ENCODE measurements at regions of chr10 and their contacts with region 1.

Region 1: GRCh38 chr10:70363971-70364771 is 18.3 kb downstream of the LRRC20 start:
- DNase-seq: peak; percentile 63 to 92 (median 85)
- ATAC-seq: peak; percentile 99
- H3K4me3 ChIP-seq: no peak overlapping the region
- H3K4me3 Mint-ChIP-seq: no peak overlapping the region
- H3K27ac ChIP-seq: no peak overlapping the region
- H3K27ac Mint-ChIP-seq: no peak overlapping the region
- H3K4me1 ChIP-seq: peaks cover 10% of the 10 kb centered on the region
- H3K4me1 Mint-ChIP-seq: peaks cover 8% of the 10 kb centered on the region
- H3K27me3 ChIP-seq: no peaks in the 10 kb centered on the region
- H3K27me3 Mint-ChIP-seq: peaks cover 2% of the 10 kb centered on the region
- CTCF ChIP-seq: peak; percentile 87

Region 2: GRCh38 chr10:70084189-70084588 is 280.0 kb before region 1 on chr10:
- CTCF ChIA-PET with region 1: interaction called, 5 read pairs
- POLR2A ChIA-PET with region 1: no interaction called
- intact Hi-C with region 1: loop called (anchors 1 to 10 kb)
- DNase-seq: peak in 2 of 9 experiments; percentile 15 to 31
- ATAC-seq: no peak
- H3K4me3 ChIP-seq: no peak overlapping the region
- H3K4me3 Mint-ChIP-seq: no peak overlapping the region
- H3K27ac ChIP-seq: no peak overlapping the region
- H3K27ac Mint-ChIP-seq: no peak overlapping the region
- H3K4me1 ChIP-seq: no peaks in the 10 kb centered on the region
- H3K4me1 Mint-ChIP-seq: no peaks in the 10 kb centered on the region
- H3K27me3 ChIP-seq: no peaks in the 10 kb centered on the region
- H3K27me3 Mint-ChIP-seq: no peaks in the 10 kb centered on the region
- CTCF ChIP-seq: no peak

Region 3: GRCh38 chr10:70197235-70197945 is 166.8 kb before region 1 on chr10:
- CTCF ChIA-PET with region 1: interaction called, 11 read pairs
- POLR2A ChIA-PET with region 1: no interaction called
- intact Hi-C with region 1: no loop called
- DNase-seq: peak in 4 of 9 experiments; percentile 29 to 58 (median 46)
- ATAC-seq: no peak
- H3K4me3 ChIP-seq: no peak overlapping the region
- H3K4me3 Mint-ChIP-seq: peak overlapping the region; percentile 33
- H3K27ac ChIP-seq: peak overlapping the region in 1 of 2 experiments; percentile 50
- H3K27ac Mint-ChIP-seq: peak overlapping the region; percentile 72
- H3K4me1 ChIP-seq: peaks cover 15% of the 10 kb centered on the region
- H3K4me1 Mint-ChIP-seq: peaks cover 31% of the 10 kb centered on the region
- H3K27me3 ChIP-seq: no peaks in the 10 kb centered on the region
- H3K27me3 Mint-ChIP-seq: no peaks in the 10 kb centered on the region
- CTCF ChIP-seq: no peak

Region 4: GRCh38 chr10:70233109-70233938 is 130.8 kb before region 1 on chr10 and contains the start of gene PPA1:
- CTCF ChIA-PET with region 1: interaction called, 65 read pairs
- POLR2A ChIA-PET with region 1: interaction called, 11 read pairs
- intact Hi-C with region 1: no loop called
- DNase-seq: peak; percentile 98 to 100 (median 99)
- ATAC-seq: peak; percentile 93
- H3K4me3 ChIP-seq: peak within 1 kb of the TSS; percentile 87 to 90
- H3K4me3 Mint-ChIP-seq: peak within 1 kb of the TSS; percentile 89
- H3K27ac ChIP-seq: peak within 1 kb of the TSS; percentile 74 to 80
- H3K27ac Mint-ChIP-seq: peak within 1 kb of the TSS; percentile 93
- H3K4me1 ChIP-seq: peaks cover 9% of the 10 kb centered on the region
- H3K4me1 Mint-ChIP-seq: peaks cover 36% of the 10 kb centered on the region
- H3K27me3 ChIP-seq: no peaks in the 10 kb centered on the region
- H3K27me3 Mint-ChIP-seq: peaks cover 4% of the 10 kb centered on the region
- CTCF ChIP-seq: no peak
- total RNA-seq, gene PPA1: 79.9 to 83.1 TPM

Region 5: GRCh38 chr10:70272925-70273316 is 91.2 kb before region 1 on chr10:
- CTCF ChIA-PET with region 1: interaction called, 53 read pairs
- POLR2A ChIA-PET with region 1: no interaction called
- intact Hi-C with region 1: loop called (anchors 1 to 2 kb)
- DNase-seq: peak in 2 of 9 experiments; percentile 55 to 73
- ATAC-seq: peak; percentile 86
- H3K4me3 ChIP-seq: no peak overlapping the region
- H3K4me3 Mint-ChIP-seq: peak overlapping the region; percentile 57
- H3K27ac ChIP-seq: no peak overlapping the region
- H3K27ac Mint-ChIP-seq: no peak overlapping the region
- H3K4me1 ChIP-seq: no peaks in the 10 kb centered on the region
- H3K4me1 Mint-ChIP-seq: peaks cover 9% of the 10 kb centered on the region
- H3K27me3 ChIP-seq: no peaks in the 10 kb centered on the region
- H3K27me3 Mint-ChIP-seq: no peaks in the 10 kb centered on the region
- CTCF ChIP-seq: peak; percentile 73

Region 6: DNA sequence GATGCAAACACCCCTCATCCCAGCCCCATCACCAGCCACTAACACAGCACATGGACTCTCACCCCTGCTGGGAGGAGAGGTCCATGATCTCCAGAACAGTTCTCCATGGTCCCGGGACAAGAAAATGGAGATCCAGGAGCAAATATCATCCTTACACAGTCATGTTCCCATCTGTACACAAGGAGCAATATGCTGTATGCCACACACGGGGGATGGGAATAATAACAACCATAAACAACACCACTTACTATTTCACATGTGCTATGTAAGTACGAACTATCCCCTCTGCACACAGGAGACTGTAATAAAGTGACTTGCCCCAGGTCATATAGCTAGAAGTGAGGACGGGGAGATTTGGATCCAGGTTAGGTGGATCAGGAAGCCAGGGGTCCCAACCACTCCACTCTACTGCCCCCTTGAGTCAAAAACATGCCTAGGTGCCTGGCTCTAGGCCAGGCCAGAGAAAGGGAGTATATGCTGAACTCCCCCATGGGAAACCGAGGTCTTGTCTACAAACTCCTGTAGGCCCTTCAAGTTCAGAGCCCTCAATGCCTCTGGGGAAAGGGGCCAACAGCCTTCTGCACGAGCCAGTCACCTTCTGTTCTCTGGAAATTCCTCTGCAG is 15.8 kb before region 1 on chr10:
- CTCF ChIA-PET with region 1: interaction called, 28 read pairs
- POLR2A ChIA-PET with region 1: no interaction called
- intact Hi-C with region 1: no loop called
- DNase-seq: peak in 6 of 9 experiments; percentile 18 to 60 (median 32)
- ATAC-seq: peak; percentile 38
- H3K4me3 ChIP-seq: no peak overlapping the region
- H3K4me3 Mint-ChIP-seq: no peak overlapping the region
- H3K27ac ChIP-seq: no peak overlapping the region
- H3K27ac Mint-ChIP-seq: no peak overlapping the region
- H3K4me1 ChIP-seq: no peaks in the 10 kb centered on the region
- H3K4me1 Mint-ChIP-seq: no peaks in the 10 kb centered on the region
- H3K27me3 ChIP-seq: no peaks in the 10 kb centered on the region
- H3K27me3 Mint-ChIP-seq: no peaks in the 10 kb centered on the region
- CTCF ChIP-seq: peak; percentile 39

Region 7: DNA sequence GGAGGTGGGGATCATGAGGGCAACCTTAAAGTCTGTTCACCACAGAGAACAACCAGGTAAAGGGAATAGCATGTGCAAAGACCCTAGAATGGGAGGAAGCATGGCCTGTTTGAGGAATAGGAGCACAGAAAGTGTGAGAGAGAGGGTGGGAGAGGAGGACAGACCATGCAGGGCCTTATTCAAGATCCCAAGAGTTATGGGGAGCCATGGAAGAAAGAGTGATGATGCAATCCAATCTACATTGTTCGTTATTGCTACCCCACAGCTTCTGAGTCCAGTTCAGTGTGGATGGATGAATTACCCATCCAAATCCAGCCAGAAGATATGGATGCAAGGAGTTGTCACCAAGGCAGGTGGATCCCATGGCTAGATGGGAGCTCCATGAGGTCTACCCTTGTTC is 32.0 kb after region 1 on chr10:
- CTCF ChIA-PET with region 1: interaction called, 16 read pairs
- POLR2A ChIA-PET with region 1: no interaction called
- intact Hi-C with region 1: no loop called
- DNase-seq: no peak
- ATAC-seq: no peak
- H3K4me3 ChIP-seq: no peak overlapping the region
- H3K4me3 Mint-ChIP-seq: no peak overlapping the region
- H3K27ac ChIP-seq: no peak overlapping the region
- H3K27ac Mint-ChIP-seq: no peak overlapping the region
- H3K4me1 ChIP-seq: no peaks in the 10 kb centered on the region
- H3K4me1 Mint-ChIP-seq: no peaks in the 10 kb centered on the region
- H3K27me3 ChIP-seq: no peaks in the 10 kb centered on the region
- H3K27me3 Mint-ChIP-seq: peaks cover 7% of the 10 kb centered on the region
- CTCF ChIP-seq: no peak